Mammary epithelial cell (primary cell): ENCODE measurements at regions of chr16 and their contacts with region 1.

Region 1: DNA sequence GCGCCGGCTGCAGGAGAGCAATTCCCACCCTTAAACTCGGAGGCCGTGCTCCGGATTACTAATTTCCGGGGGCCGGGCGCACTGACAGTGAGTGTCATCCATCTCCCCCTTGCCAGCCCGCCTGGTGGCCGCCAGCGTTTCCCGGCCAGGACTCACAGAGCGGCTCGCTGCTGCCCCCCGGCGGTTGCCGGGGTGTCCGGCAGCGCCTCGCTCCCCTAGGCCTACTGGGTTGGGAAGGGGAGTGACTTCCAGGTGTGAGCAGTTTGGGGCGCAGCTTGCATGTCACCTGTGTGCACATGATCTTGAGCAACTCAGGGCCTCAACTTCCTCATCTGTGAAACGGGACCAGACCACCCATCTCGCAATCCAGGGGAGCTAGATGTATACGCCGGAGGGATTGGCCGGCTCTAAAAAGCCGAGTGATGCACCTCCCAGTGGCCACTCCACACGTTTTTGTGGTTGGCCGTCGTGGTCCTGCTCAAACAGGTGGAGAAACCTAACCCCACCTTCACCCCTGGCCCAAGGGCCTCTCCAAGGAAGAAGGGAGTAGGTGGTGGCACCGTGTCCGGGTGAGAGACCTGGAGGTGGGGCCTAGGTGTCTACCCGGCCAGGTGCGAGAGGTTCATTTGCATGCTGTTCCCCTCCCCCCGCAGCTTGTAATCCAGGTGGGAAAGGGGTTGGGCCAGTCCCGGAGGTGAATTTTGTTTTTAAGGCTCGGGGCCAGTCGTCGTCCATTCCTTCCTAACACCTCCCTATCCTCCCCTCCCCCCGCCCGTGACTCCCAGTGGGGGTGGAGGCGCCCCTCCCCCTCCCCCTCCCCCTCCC is 2.4 kb upstream of the GSE1 start:
- DNase-seq: peak; percentile 78
- H3K4me3 ChIP-seq: peak overlapping the region in 1 of 3 experiments; percentile 55
- H3K27ac ChIP-seq: peak overlapping the region; percentile 19
- H3K4me1 ChIP-seq: peaks cover 43% of the 10 kb centered on the region
- H3K27me3 ChIP-seq: no peaks in the 10 kb centered on the region
- CTCF ChIP-seq: peak; percentile 84 to 96

Region 2: DNA sequence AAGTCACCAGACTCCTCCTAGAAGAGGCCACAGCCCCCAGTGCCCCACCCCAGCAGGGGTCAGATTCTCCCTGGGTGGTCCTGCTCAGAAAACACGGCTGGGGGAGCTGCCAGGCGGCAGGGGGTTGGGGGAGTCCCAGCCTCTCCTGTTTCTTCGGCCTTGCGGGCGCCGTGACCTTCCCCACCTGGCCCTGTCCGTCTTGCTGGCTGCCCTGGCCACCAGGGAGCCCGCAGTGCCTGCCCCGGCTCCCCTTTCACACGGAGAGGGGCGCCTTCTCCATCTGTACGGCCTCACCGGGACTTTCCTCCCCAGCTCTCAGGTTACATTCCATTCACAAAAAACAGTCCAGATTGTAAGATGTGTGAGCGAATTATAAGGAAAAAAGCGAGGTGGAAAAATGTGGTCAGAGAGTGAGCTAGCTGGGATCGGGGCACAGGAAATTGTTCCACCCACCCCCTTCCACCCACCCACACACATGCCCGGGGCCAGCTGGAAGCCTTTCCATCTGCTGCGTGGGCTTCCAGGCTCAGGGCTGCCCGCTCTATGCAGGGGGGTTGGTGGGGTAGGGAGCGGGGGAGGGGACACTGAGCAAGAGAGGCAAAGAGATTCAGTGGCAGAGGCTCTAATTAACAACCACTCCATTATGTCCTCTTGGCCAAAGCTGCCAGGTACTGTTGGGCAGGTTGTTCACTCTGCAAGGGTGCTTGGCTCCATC is 483.9 kb before region 1 on chr16:
- CTCF ChIA-PET with region 1: no interaction called
- dilution Hi-C with region 1: no loop called
- in situ Hi-C with region 1: loop called in 1 of 2 experiments (anchors 25 kb)
- intact Hi-C with region 1: no loop called
- DNase-seq: peak; percentile 40
- H3K4me3 ChIP-seq: no peak overlapping the region
- H3K27ac ChIP-seq: no peak overlapping the region
- H3K4me1 ChIP-seq: peaks cover 33% of the 10 kb centered on the region
- H3K27me3 ChIP-seq: no peaks in the 10 kb centered on the region
- CTCF ChIP-seq: no peak

Region 3: GRCh38 chr16:85305996-85306792 is 304.5 kb before region 1 on chr16:
- CTCF ChIA-PET with region 1: no interaction called
- dilution Hi-C with region 1: no loop called
- in situ Hi-C with region 1: loop called in 1 of 2 experiments (anchors 25 kb)
- intact Hi-C with region 1: loop called (anchors 1 kb)
- DNase-seq: peak; percentile 61
- H3K4me3 ChIP-seq: no peak overlapping the region
- H3K27ac ChIP-seq: no peak overlapping the region
- H3K4me1 ChIP-seq: peaks cover 3% of the 10 kb centered on the region
- H3K27me3 ChIP-seq: no peaks in the 10 kb centered on the region
- CTCF ChIP-seq: no peak

Region 4: DNA sequence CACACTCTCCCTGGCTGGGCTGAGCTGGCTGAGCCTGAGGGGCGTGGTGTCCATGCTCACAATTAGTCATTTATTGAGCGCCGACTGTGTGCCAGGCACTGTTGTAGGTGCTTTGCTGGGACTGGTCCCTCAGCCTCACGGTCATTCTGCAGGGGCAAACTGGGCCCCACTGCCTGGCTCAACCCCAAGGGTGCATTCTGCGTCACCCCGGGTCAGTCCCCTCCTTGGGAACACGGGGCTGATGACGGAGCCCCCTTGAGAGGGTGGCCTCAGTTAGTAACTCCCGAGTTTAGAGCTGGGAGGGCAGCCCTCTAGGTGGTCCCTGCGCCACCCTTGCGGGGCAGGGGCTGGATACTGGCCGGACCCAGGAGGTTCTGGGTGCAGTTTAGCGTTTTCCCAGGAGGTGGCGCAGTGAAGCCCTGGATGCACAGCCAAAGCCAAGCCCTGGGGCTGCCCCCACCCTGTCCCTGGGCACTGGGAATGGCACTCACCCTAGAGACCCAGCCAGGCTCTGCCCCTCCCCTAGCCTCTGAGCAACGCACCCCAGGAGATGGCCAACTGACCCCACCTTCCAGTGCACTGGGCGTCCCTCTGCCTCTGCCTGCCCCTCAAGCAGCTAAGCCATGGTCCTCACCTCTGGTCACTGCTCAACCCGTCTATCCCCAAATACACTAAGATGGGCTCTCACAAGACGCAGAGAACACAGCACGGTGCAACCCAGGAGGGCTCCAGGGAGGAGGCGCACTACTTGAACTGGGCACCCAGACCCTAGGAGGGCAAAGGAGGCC is 240.8 kb before region 1 on chr16:
- CTCF ChIA-PET with region 1: no interaction called
- dilution Hi-C with region 1: no loop called
- in situ Hi-C with region 1: no loop called
- intact Hi-C with region 1: loop called (anchors 1 kb)
- DNase-seq: no peak
- H3K4me3 ChIP-seq: no peak overlapping the region
- H3K27ac ChIP-seq: no peak overlapping the region
- H3K4me1 ChIP-seq: peaks cover 47% of the 10 kb centered on the region
- H3K27me3 ChIP-seq: no peaks in the 10 kb centered on the region
- CTCF ChIP-seq: peak; percentile 68 to 83

Region 5: GRCh38 chr16:85420501-85421337 is 190.0 kb before region 1 on chr16:
- CTCF ChIA-PET with region 1: interaction called, 4 read pairs
- dilution Hi-C with region 1: no loop called
- in situ Hi-C with region 1: loop called (anchors 10 kb)
- intact Hi-C with region 1: loop called (anchors 1 kb)
- DNase-seq: peak; percentile 20
- H3K4me3 ChIP-seq: no peak overlapping the region
- H3K27ac ChIP-seq: no peak overlapping the region
- H3K4me1 ChIP-seq: no peaks in the 10 kb centered on the region
- H3K27me3 ChIP-seq: no peaks in the 10 kb centered on the region
- CTCF ChIP-seq: peak; percentile 82 to 90

Region 6: DNA sequence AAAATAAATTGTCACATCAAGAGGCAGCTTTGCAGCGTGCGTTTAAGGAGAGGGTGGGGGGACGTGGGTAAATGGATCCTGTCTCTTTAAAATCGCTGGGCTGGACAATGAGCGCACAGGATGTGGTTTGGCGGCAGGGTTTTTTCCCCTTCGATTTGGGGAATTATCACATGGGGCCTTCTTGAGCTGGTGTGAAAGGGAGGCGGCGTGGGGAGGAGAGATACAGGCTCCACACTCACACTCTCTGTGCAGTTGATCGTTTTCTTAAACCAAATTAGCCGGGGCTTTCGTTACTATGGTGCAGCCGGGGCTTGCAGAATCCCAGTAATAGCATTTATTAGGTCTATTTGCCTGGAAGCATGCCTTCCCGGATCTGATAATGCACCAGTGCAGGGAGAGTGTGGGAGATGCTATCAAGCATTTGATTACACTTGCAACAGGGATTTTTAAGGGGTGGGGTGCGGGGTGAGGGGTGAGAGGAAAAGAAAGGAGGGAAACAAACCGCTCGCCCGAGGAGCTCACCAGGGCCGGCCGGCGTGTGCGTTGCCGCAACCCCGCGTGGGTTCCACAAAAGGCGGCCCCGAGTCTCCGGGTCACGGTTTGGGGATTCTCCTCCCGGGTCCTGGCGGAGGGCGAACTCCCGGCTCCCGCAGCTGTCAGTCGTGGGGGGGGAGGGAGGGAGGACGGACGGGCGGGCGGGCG is 56.5 kb before region 1 on chr16:
- CTCF ChIA-PET with region 1: no interaction called
- dilution Hi-C with region 1: no loop called
- in situ Hi-C with region 1: no loop called
- intact Hi-C with region 1: loop called (anchors 1 kb)
- DNase-seq: peak; percentile 79
- H3K4me3 ChIP-seq: peak overlapping the region; percentile 38 to 74 (median 71)
- H3K27ac ChIP-seq: peak overlapping the region; percentile 53
- H3K4me1 ChIP-seq: peaks cover 22% of the 10 kb centered on the region
- H3K27me3 ChIP-seq: no peaks in the 10 kb centered on the region
- CTCF ChIP-seq: no peak

Region 7: GRCh38 chr16:85750827-85751697 is 140.3 kb after region 1 on chr16 and contains the start of gene C16orf74:
- CTCF ChIA-PET with region 1: no interaction called
- dilution Hi-C with region 1: no loop called
- in situ Hi-C with region 1: no loop called
- intact Hi-C with region 1: loop called (anchors 5 kb)
- DNase-seq: peak; percentile 68
- H3K4me3 ChIP-seq: peak within 1 kb of the TSS; percentile 84 to 92 (median 86)
- H3K27ac ChIP-seq: peak within 1 kb of the TSS; percentile 69
- H3K4me1 ChIP-seq: peaks cover 63% of the 10 kb centered on the region
- H3K27me3 ChIP-seq: no peaks in the 10 kb centered on the region
- CTCF ChIP-seq: no peak
- total RNA-seq, gene C16orf74: 19.7 to 121 TPM